ENCODE measurements at regions of chr7 and their contacts with region 1.

Region 1: GRCh38 chr7:23181684-23182553 is at the start of gene NUP42:
- DNase-seq: peak; percentile 99
- ATAC-seq: peak; percentile 91
- H3K4me3 ChIP-seq: peak within 1 kb of the TSS; percentile 88
- H3K27ac ChIP-seq: peak within 1 kb of the TSS; percentile 56
- H3K4me1 ChIP-seq: peaks cover 27% of the 10 kb centered on the region
- H3K27me3 ChIP-seq: no peaks in the 10 kb centered on the region
- CTCF ChIP-seq: no peak
- total RNA-seq, gene NUP42: 30.1 and 48.6 TPM in 2 replicates

Region 2: DNA sequence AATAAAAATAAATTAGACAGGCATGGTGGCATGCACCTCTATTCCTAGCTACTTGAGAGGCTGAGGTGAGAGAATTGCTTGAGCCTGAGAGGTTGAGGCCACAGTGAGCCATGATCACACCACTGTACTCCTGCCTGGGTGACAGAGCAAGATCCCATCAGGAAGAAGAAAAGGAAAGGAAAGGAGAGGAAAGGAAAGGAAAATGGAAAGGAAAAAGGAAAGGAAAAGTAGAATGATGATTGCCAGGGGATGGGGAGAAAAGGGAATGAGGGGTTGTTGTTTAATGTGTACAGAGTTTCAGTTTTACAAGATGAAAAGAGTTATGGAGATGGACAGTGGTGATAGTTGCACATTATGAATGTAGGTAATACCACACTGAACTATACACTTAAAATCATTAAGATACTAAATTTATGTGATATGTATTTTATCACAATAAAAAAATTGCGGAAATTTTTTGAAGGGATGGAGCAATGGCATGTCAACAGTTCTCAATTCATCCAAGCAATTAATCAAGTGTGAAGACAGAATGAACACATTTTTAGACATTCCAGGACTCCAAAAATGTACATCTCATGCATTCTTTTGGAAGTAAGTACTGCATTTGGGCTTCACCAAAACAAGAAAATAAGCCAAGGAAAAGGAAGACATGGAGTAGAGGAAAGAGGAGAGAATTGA is 410.6 kb before region 1 on chr7:
- CTCF ChIA-PET with region 1: no interaction called
- POLR2A ChIA-PET with region 1: no interaction called
- intact Hi-C with region 1: no loop called
- DNase-seq: no peak
- ATAC-seq: no peak
- H3K4me3 ChIP-seq: no peak overlapping the region
- H3K27ac ChIP-seq: no peak overlapping the region
- H3K4me1 ChIP-seq: no peaks in the 10 kb centered on the region
- H3K27me3 ChIP-seq: no peaks in the 10 kb centered on the region
- CTCF ChIP-seq: no peak

Region 3: DNA sequence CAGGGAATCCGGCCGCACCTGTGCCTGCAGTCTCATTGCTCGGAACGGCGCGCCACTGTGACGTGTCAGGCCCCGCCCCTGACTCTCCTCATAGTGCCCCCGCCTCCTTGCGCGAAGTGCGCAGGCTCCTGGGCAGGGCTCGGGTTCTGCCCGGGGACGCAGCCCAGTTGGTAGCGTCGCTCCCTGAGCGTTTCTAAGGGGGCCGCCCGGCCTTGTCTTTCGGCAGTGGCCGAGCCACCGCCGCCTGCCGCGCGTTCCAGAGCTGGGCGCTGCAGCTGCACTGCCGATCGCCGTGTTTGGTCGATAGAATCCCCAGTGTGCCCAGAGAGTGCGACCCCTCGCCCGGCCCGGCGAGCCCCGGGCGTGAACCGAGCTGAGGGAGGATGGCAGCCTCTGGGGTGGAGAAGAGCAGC is 76.3 kb before region 1 on chr7 and contains the start of gene KLHL7:
- CTCF ChIA-PET with region 1: interaction called, 4 read pairs
- POLR2A ChIA-PET with region 1: no interaction called
- intact Hi-C with region 1: loop called (anchors 2 kb)
- DNase-seq: peak; percentile 94
- ATAC-seq: peak; percentile 91
- H3K4me3 ChIP-seq: peak within 1 kb of the TSS; percentile 98
- H3K27ac ChIP-seq: peak within 1 kb of the TSS; percentile 50
- H3K4me1 ChIP-seq: peaks cover 14% of the 10 kb centered on the region
- H3K27me3 ChIP-seq: no peaks in the 10 kb centered on the region
- CTCF ChIP-seq: no peak
- total RNA-seq, gene KLHL7: 31.1 and 34.9 TPM in 2 replicates

Region 4: GRCh38 chr7:23261843-23262452 is 80.0 kb after region 1 on chr7:
- CTCF ChIA-PET with region 1: no interaction called
- POLR2A ChIA-PET with region 1: no interaction called
- intact Hi-C with region 1: loop called (anchors 2 kb)
- DNase-seq: peak; percentile 72
- ATAC-seq: peak; percentile 99
- H3K4me3 ChIP-seq: 0 out of 2 replicates have a peak overlapping the region, but pooled peaks have one; percentile 11
- H3K27ac ChIP-seq: no peak overlapping the region
- H3K4me1 ChIP-seq: no peaks in the 10 kb centered on the region
- H3K27me3 ChIP-seq: peaks cover 4% of the 10 kb centered on the region; the same call in 1 of the 2 replicates
- CTCF ChIP-seq: peak; percentile 91

Measured in PC-3 (cell line).